ENCODE measurements at regions of chrX and their contacts with region 1.

Region 1: GRCh38 chrX:107849740-107850421 is 24.2 kb downstream of the MID2 start:
- DNase-seq: no peak
- H3K4me3 Mint-ChIP-seq: no peak overlapping the region
- H3K27ac Mint-ChIP-seq: no peak overlapping the region
- H3K4me1 Mint-ChIP-seq: peaks cover 5% of the 10 kb centered on the region
- H3K27me3 Mint-ChIP-seq: no peaks in the 10 kb centered on the region

Region 2: DNA sequence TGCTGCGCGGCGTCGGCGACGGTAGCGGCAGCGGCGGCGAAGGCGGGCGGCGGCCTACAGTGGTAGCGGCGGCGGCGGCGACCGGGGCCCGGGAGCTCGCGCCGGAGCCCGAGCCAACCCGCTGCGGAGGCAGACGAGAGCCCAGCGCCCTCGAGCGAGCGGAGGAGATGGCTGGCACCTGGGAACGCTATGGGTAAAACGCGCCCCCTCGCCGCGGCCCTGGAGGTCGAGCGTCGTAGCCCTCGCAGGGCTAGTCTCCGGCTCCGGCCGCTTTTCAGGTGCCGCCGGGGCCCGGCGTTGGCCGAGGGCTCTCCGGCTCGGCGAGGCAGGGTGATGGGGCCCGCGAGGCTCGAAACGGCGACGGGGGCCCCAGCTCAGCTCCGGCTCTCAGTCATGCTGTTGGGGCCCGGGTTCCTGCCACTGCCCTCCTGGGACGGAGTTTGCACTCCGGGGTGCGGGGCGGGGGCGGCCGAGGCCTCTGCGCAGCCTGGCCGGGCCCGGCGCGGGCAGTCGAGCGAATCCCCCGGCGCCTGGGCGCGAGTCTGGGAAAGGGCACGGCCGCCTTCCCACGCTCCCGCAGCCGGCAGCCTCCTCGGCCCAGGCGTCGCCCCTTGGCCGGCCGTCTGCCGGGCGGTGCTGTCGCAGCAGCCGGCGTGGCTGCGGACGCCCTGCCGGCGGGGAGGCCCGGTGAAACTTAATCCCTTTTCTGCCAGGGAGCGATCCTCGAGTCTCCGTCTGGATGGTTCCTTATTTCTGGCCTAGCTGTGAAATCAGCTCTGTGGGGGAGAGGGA is 23.4 kb before region 1 on chrX:
- intact Hi-C with region 1: loop called (anchors 2 kb)
- DNase-seq: no peak
- H3K4me3 Mint-ChIP-seq: peak overlapping the region; percentile 81
- H3K27ac Mint-ChIP-seq: peak overlapping the region; percentile 67
- H3K4me1 Mint-ChIP-seq: peaks cover 25% of the 10 kb centered on the region
- H3K27me3 Mint-ChIP-seq: peaks cover 14% of the 10 kb centered on the region

Measured in activated T-helper 2 cell treated with anti-CD3 and anti-CD28 coated beads, Interferon-gamma antibody, Interleukin-2, Interleukin-4, amounts not matched to agents 10 μg/mL and 5 μg/mL and 100 μg/mL, durations not matched to agents 14 hours and 24 hours and 36 hours (primary cell).